ENCODE measurements at regions of chr1 and their contacts with region 1.

Region 1: DNA sequence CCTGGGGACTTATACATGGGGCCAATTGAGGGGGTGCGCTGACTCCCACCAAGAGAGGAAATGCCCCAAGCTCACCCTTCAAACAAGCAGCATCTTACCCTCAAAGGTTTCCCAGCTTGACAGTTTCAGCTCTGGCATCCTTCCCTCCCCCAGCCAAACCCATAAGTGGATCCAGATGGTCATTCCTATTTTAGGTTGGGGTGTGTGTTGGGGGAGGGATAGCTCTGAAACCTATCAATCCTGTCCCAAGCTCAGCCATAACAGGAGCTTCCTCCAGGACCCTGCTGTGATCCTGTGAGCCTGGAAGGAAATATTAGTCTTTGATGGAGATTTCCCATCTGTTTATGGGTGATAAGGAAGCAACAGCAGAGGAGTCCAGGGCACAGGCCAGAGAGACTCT is 3.4 kb upstream of the TMEM222 start:
- DNase-seq: no peak
- CTCF ChIP-seq: no peak

Region 2: GRCh38 chr1:27372808-27373690 is 54.5 kb after region 1 on chr1:
- in situ Hi-C with region 1: loop called (anchors 10 kb)
- DNase-seq: no peak
- CTCF ChIP-seq: peak; percentile 27